ENCODE measurements at regions of chr11 and their contacts with region 1.

Region 1: DNA sequence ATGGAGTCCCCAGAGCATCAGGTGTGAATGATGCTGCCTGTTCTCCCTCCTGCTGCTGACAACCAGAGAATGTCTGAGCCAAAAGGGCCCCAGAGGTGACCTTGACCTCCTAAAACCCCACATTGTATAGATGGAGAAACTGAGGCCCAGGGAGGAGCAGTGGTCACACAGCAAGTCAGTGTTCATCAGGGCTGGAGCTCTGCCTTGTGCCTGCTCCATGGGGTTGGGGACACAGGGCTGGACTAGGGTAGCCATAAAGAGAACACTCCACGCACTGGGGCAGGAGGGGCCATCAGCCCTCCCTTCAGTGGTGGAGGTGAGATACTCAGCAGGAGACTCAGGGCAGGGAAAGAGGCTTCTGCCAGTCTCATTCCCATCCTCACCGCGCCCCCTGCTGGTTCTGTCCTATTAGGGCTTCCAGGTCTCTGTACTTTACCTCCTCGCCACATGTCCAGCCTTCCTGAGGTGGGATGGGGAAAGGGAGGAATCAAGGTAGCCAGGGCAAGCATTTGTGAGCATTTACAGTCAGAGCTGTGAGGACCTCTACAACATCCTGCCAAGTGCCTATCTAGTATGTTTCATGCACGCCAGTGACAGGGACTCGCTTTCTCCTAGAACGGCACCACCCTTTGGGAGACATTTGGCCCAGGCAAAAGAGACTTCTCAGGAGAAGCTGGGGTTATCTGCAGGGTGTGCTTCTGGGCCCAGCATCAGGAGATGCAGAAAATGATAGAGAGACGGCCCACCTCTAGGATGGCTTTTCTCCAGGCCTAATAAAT is 43.2 kb downstream of the NEU3 start:
- DNase-seq: peak; percentile 39 to 93
- H3K4me3 ChIP-seq: no peak overlapping the region
- H3K27ac ChIP-seq: no peak overlapping the region
- H3K4me1 ChIP-seq: 0 out of 7 replicates have a peak, but pooled peaks cover 0 to 2% (median 0%) of the 10 kb centered on the region in 4 experiments
- H3K27me3 ChIP-seq: no peaks in the 10 kb centered on the region
- CTCF ChIP-seq: peak; percentile 79 to 92 (median 81)
- EP300 ChIP-seq: no peak
- POLR2A ChIP-seq: no peak
- RAD21 ChIP-seq: peak; percentile 62 to 70

Region 2: GRCh38 chr11:74929431-74930363 is 102.3 kb before region 1 on chr11:
- CTCF ChIA-PET with region 1: interaction called, 21 read pairs
- POLR2A ChIA-PET with region 1: no interaction called
- DNase-seq: peak in 1 of 2 experiments; percentile 66
- H3K4me3 ChIP-seq: no peak overlapping the region
- H3K27ac ChIP-seq: no peak overlapping the region
- H3K4me1 ChIP-seq: no peaks in the 10 kb centered on the region
- H3K27me3 ChIP-seq: no peaks in the 10 kb centered on the region
- CTCF ChIP-seq: peak in 2 of 3 experiments; percentile 77 to 81; a peak in 3 of 4 replicates
- EP300 ChIP-seq: no peak
- POLR2A ChIP-seq: no peak
- RAD21 ChIP-seq: peak; percentile 82 to 90

Region 3: DNA sequence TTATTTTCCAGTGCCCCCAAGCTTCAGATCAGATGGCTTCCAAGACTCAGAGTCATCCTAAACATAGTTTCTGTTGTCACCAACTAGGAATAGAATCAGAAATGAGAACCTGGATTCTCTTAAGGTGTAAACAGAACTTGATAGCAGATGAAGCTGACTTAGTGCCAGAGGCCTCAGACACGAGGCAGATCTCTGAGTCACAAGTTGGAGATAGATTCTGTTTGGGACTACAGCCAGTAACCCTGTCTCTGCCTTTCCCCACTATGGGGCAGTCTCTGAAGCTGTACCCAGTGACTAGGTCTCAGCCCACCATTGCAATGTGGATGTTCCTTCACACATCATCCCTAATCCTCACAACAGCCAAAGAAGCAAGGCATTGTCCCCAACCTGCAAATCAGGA is 17.8 kb before region 1 on chr11:
- CTCF ChIA-PET with region 1: interaction called, 30 read pairs
- POLR2A ChIA-PET with region 1: no interaction called
- DNase-seq: no peak
- H3K4me3 ChIP-seq: no peak overlapping the region
- H3K27ac ChIP-seq: no peak overlapping the region
- H3K4me1 ChIP-seq: no peaks in the 10 kb centered on the region
- H3K27me3 ChIP-seq: no peaks in the 10 kb centered on the region
- CTCF ChIP-seq: no peak
- EP300 ChIP-seq: no peak
- POLR2A ChIP-seq: no peak
- RAD21 ChIP-seq: no peak

Region 4: GRCh38 chr11:75047191-75047590 is 15.2 kb after region 1 on chr11:
- CTCF ChIA-PET with region 1: interaction called, 18 read pairs
- POLR2A ChIA-PET with region 1: no interaction called
- DNase-seq: no peak
- H3K4me3 ChIP-seq: no peak overlapping the region
- H3K27ac ChIP-seq: no peak overlapping the region
- H3K4me1 ChIP-seq: peaks cover 0 to 2% (median 0%) of the 10 kb centered on the region in 4 experiments; a peak in 1 of 7 replicates
- H3K27me3 ChIP-seq: no peaks in the 10 kb centered on the region; a peak in 2 of 7 replicates
- CTCF ChIP-seq: no peak
- EP300 ChIP-seq: no peak
- POLR2A ChIP-seq: no peak
- RAD21 ChIP-seq: no peak

Region 5: DNA sequence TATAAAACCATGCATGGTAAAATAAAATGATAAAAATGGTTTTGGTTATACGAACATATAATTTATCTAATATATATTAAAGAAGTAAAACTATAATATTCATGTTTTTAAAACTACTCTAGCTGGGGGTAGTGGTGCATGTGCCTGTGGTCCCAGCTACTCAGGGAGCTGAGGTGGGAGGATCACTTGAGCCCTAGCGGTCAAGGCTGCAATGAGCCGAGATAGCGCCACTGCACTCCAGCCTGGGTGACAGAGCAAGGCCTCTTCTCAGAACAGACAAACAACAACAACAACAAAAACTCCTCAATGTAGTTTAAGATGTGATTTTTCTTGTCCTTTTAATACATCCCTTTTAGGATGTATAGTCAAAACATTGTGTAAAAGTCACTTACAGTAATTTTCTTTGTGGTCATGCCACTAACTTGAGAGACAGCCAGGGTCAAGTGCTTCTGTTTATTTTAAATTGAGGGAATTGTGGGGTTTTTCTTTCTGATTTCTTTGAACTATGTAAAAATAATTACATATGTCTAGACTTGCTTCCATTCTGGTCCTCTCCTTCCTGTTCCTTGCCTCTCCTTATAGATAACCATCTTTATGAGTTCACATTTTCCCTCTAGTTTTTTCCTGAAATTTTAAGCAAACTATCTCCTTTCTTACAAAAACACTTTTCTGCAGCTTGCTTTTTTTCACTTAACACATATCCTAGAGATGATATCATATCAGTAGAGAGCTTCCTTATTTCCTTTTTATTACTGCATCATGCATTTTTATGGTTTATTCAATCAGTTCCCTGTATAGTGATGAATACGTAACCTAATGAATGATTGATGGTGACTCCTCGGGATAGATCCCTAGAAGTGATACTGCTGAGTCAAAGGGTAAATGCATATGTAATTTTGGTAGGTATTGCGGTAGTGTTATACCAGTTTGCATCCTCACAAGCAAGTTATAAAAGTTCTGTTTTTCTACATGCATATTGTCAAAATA is 55.7 kb after region 1 on chr11:
- CTCF ChIA-PET with region 1: no interaction called
- POLR2A ChIA-PET with region 1: no interaction called
- DNase-seq: no peak
- H3K4me3 ChIP-seq: no peak overlapping the region
- H3K27ac ChIP-seq: no peak overlapping the region
- H3K4me1 ChIP-seq: no peaks in the 10 kb centered on the region
- H3K27me3 ChIP-seq: no peaks in the 10 kb centered on the region
- CTCF ChIP-seq: peak in 2 of 3 experiments; percentile 10 to 42; a peak in 3 of 4 replicates
- EP300 ChIP-seq: no peak
- POLR2A ChIP-seq: no peak
- RAD21 ChIP-seq: no peak